WTC11 (cell line): ENCODE measurements at regions of chr10 and their contacts with region 1.

Region 1: DNA sequence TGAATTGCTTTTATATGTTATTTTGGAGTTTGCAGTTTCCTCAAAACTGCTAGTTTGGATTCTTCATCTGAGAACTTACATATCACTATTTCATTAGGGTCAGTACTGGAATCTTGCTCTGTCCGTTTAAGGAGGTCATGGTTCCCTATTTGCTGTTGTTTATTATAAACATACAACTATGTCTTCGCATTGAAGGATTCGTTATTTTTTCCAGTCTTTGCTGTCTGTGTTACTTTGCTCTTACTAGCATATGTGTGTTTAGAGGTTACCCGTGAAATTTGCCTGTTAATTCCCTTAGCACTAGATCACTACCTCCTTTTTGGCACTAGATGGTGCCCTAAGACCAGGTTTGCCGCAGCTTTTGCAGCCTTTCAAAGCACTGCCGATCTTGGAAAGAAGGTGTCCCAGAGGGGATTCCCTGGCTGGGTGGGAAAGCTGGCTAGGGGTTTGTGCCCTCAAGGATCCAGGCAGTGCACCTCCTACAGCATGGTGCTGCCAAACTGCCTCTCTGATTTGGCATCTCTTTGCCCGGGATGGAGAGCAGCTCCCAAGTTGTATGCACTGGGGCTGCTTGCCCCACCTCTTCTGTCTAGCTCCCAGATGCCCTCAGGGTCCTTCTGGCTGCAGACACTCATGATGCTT is 103.1 kb upstream of the APBB1IP start:
- DNase-seq: peak; percentile 58
- ATAC-seq: peak; percentile 93
- H3K4me3 Mint-ChIP-seq: peak overlapping the region; percentile 39
- H3K27ac Mint-ChIP-seq: no peak overlapping the region
- H3K4me1 Mint-ChIP-seq: peaks cover 5% of the 10 kb centered on the region
- H3K27me3 Mint-ChIP-seq: no peaks in the 10 kb centered on the region
- CTCF ChIP-seq: peak; percentile 78

Region 2: DNA sequence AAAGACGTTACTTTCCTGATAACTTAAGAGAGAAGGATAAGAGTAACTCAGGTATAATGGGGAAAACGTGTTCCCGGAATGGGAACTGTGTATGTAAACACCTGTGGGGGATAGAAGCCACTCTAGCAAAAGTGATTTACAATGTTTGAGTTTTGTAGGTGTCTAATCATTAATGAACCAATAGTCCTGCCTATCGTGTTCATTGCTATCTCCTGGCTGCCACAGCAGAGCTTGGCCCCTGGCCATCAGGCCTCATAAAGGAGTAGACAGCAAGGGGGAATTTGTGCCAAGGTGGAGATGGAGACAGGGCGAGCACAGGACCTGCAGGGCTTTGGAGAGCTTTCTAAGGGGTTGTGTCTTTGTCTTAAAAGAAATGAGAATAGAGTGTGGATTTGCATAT is 16.4 kb before region 1 on chr10:
- CTCF ChIA-PET with region 1: no interaction called
- POLR2A ChIA-PET with region 1: no interaction called
- DNase-seq: no peak
- ATAC-seq: no peak
- H3K4me3 Mint-ChIP-seq: no peak overlapping the region
- H3K27ac Mint-ChIP-seq: no peak overlapping the region
- H3K4me1 Mint-ChIP-seq: 0 out of 2 replicates have a peak, but pooled peaks cover 2% of the 10 kb centered on the region
- H3K27me3 Mint-ChIP-seq: no peaks in the 10 kb centered on the region
- CTCF ChIP-seq: no peak

Region 3: DNA sequence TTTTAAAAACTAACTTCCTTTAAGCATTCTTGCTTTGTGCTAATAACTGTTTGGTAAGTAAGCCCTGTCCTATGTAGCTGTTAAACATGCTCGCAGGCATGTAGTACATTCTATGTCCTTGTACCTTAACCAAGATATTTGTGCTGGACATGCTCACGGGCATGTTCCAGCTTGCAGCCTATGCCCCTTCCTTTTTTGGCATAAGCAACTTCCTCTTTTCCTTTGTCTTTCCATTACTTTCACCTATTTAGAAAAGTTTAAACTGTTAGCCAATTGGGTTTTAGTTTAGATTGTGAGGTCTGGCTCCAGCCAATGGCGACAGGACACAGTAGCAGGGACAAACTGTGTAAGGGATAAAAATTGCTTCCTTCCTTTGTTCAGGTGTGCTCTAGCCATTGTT is 88.7 kb after region 1 on chr10:
- CTCF ChIA-PET with region 1: no interaction called
- POLR2A ChIA-PET with region 1: no interaction called
- DNase-seq: no peak
- ATAC-seq: no peak
- H3K4me3 Mint-ChIP-seq: no peak overlapping the region
- H3K27ac Mint-ChIP-seq: no peak overlapping the region; the same call in 1 of the 2 replicates
- H3K4me1 Mint-ChIP-seq: peaks cover 8% of the 10 kb centered on the region
- H3K27me3 Mint-ChIP-seq: no peaks in the 10 kb centered on the region
- CTCF ChIP-seq: no peak

Region 4: GRCh38 chr10:26556748-26557640 is 221.9 kb after region 1 on chr10:
- CTCF ChIA-PET with region 1: interaction called, 41 read pairs
- POLR2A ChIA-PET with region 1: no interaction called
- DNase-seq: no peak
- ATAC-seq: peak; percentile 86
- H3K4me3 Mint-ChIP-seq: no peak overlapping the region
- H3K27ac Mint-ChIP-seq: no peak overlapping the region
- H3K4me1 Mint-ChIP-seq: peaks cover 24% of the 10 kb centered on the region
- H3K27me3 Mint-ChIP-seq: no peaks in the 10 kb centered on the region; the same call in 1 of the 2 replicates
- CTCF ChIP-seq: 0 out of 2 replicates have a peak, but pooled peaks have one; percentile 23